ENCODE measurements at regions of chr3 and their contacts with region 1.

Region 1: GRCh38 chr3:52238761-52239701 is at the start of gene TWF2:
- DNase-seq: peak; percentile 97
- CTCF ChIP-seq: peak; percentile 44

Region 2: DNA sequence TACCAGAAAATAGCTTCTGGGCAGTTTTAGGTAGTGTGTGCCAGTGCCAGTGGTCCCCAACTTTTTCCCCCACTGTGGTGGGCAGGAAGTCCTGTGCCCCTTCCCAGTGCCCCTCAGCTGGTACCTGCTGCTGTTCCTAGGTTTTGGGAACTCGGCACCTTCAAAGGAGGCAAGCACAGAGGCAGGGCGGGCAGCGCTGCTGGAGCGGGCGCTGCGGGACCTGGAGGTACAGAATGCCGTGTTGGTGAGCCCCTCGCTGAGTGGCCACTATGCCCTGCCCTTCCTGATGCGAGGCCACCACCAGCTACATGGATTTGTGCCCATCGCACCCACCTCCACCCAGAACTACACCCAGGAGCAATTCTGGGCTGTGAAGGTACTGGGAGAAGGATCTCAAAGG is 258.8 kb before region 1 on chr3:
- CTCF ChIA-PET with region 1: no interaction called
- POLR2A ChIA-PET with region 1: no interaction called
- DNase-seq: no peak
- CTCF ChIP-seq: no peak

Region 3: GRCh38 chr3:52253314-52254304 is 14.6 kb after region 1 on chr3:
- CTCF ChIA-PET with region 1: interaction called, 14 read pairs
- POLR2A ChIA-PET with region 1: interaction called, 6 read pairs
- DNase-seq: peak; percentile 91
- CTCF ChIP-seq: no peak